ENCODE measurements at regions of chr13 and their contacts with region 1.

Region 1: DNA sequence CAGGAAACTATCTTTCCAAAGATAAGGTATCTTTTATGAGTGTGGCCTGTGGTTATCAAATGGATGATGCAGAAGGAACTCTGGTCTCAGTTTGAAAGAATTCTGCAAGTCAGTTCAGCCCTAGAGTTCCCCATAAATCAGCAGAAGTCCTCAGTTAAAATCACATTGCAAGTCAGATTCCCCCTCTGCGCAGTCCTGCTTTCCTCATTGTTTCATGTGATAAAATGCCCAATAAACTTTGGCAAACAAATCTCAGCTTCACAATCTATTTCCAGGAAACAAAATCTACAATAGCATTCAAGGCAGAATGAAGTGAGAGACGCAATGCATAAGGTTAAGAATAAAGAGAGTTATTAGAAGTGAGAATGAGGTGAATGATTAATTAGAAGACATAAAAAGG is 216.3 kb upstream of the KLHL1 start:
- DNase-seq: no peak
- CTCF ChIP-seq: no peak

Region 2: DNA sequence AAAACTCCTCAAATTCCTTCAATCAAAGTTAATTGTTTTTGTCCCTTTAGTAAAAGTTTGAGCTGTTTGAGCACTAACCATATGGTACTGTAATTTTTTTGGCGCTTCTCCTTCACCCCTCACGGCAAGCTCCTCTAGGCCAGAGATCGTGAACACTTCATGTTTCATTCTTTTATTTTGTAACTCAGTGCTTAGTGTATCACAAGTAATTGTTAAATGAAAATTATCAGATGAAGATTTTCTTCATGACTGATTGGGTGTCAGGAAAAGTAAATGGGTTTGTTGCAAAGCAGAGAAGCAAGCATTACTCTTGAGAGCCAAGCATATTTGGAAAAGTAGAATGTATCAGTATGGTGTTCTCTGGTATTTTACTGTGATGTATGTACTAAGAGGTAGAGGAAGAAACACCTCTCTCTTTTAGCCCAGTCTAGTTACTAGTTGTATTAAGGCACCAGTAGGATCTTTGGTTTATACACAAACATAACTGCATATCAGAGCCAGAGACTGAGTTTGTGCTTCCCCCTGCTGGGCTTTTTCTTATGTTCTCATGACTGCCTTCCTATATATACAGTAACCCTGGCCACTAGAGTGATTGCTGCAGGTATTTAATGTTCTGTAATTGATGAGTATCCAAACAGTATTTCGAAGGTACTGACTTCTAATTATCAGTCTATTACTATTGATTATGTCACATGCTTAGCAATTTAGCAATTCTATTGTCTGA is 14.0 kb before region 1 on chr13:
- CTCF ChIA-PET with region 1: no interaction called
- POLR2A ChIA-PET with region 1: no interaction called
- DNase-seq: no peak
- CTCF ChIP-seq: no peak

Region 3: GRCh38 chr13:70339738-70340137 is 15.2 kb after region 1 on chr13:
- CTCF ChIA-PET with region 1: interaction called, 10 read pairs
- POLR2A ChIA-PET with region 1: no interaction called
- DNase-seq: no peak
- CTCF ChIP-seq: peak; percentile 18

Measured in GM10248 (cell line).